Activated CD4-positive, alpha-beta T cell treated with anti-CD3 and anti-CD28 coated beads, Interleukin-2, amount 10 ng/mL, durations not matched to agents 24 days and 14 days (primary cell): ENCODE measurements at regions of chr5 and their contacts with region 1.

Region 1: DNA sequence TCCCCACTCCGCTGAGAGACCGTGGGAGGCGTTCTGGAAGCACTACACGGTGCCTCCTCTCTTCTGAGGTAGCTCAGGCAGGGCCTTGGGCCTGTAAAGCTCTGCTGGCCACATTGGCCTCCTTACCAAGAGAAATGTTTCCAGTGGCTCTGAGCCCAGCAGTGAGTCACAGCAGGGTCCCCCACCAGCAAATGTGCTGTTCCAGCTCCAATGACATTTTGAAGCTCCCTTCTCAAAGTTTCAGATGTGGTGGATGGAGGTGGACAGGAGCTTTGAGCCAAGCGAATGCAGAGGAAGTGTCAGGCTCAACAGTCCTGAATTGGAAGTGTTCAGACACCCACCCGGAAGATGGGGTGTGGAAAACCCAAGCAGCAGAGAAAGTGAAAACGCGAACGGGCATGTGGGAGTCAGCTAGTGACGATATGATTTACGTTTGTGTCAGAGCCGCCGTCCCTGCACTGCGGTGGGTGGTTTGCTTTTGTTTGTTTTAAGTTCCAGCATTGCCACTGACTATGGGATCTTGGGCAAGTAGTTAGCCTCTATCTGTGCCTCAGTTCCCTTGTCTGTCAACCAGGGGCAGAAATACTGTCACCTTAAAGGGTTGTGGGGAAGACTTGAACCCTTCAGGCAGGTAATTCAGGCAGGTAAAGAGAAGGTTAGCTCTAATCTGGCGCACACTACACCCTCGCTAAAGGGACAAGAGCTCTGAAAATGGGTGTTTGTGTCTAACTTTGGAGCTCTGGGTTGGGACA is 38.2 kb downstream of the C5orf15 start:
- DNase-seq: peak; percentile 88
- H3K4me3 Mint-ChIP-seq: peak overlapping the region; percentile 74
- H3K27ac Mint-ChIP-seq: peak overlapping the region; percentile 98
- H3K4me1 Mint-ChIP-seq: peaks cover 56% of the 10 kb centered on the region
- H3K27me3 Mint-ChIP-seq: no peaks in the 10 kb centered on the region

Region 2: GRCh38 chr5:133006653-133007052 is 923.6 kb before region 1 on chr5:
- intact Hi-C with region 1: no loop called
- DNase-seq: no peak
- H3K4me3 Mint-ChIP-seq: no peak overlapping the region
- H3K27ac Mint-ChIP-seq: no peak overlapping the region
- H3K4me1 Mint-ChIP-seq: no peaks in the 10 kb centered on the region
- H3K27me3 Mint-ChIP-seq: no peaks in the 10 kb centered on the region

Region 3: GRCh38 chr5:133919148-133920136 is 10.8 kb before region 1 on chr5:
- intact Hi-C with region 1: loop called (anchors 1 kb)
- DNase-seq: no peak
- H3K4me3 Mint-ChIP-seq: no peak overlapping the region
- H3K27ac Mint-ChIP-seq: peak overlapping the region; percentile 32
- H3K4me1 Mint-ChIP-seq: peaks cover 23% of the 10 kb centered on the region
- H3K27me3 Mint-ChIP-seq: no peaks in the 10 kb centered on the region

Region 4: GRCh38 chr5:133962801-133963476 is 32.7 kb after region 1 on chr5:
- intact Hi-C with region 1: loop called (anchors 1 kb)
- DNase-seq: no peak
- H3K4me3 Mint-ChIP-seq: peak overlapping the region; percentile 3
- H3K27ac Mint-ChIP-seq: peak overlapping the region; percentile 65
- H3K4me1 Mint-ChIP-seq: peaks cover 51% of the 10 kb centered on the region
- H3K27me3 Mint-ChIP-seq: no peaks in the 10 kb centered on the region